Activated CD8-positive, alpha-beta T cell treated with anti-CD3 and anti-CD28 coated beads, Interleukin-2, amount 10 ng/mL, durations not matched to agents 7 days and 5 days (primary cell): ENCODE measurements at regions of chr2 and their contacts with region 1.

Region 1: GRCh38 chr2:7725171-7725849 is 808.1 kb downstream of the RNF144A start:
- DNase-seq: peak; percentile 80
- ATAC-seq: peak; percentile 83
- H3K4me3 Mint-ChIP-seq: peak overlapping the region; percentile 76
- H3K27ac Mint-ChIP-seq: peak overlapping the region; percentile 86
- H3K4me1 Mint-ChIP-seq: peaks cover 60% of the 10 kb centered on the region
- H3K27me3 Mint-ChIP-seq: no peaks in the 10 kb centered on the region

Region 2: GRCh38 chr2:7444626-7445025 is 280.7 kb before region 1 on chr2:
- CTCF ChIA-PET with region 1: interaction called, 4 read pairs
- POLR2A ChIA-PET with region 1: interaction called, 71 read pairs
- DNase-seq: no peak
- ATAC-seq: peak; percentile 18
- H3K4me3 Mint-ChIP-seq: no peak overlapping the region
- H3K27ac Mint-ChIP-seq: peak overlapping the region; percentile 28
- H3K4me1 Mint-ChIP-seq: peaks cover 73% of the 10 kb centered on the region
- H3K27me3 Mint-ChIP-seq: no peaks in the 10 kb centered on the region

Region 3: DNA sequence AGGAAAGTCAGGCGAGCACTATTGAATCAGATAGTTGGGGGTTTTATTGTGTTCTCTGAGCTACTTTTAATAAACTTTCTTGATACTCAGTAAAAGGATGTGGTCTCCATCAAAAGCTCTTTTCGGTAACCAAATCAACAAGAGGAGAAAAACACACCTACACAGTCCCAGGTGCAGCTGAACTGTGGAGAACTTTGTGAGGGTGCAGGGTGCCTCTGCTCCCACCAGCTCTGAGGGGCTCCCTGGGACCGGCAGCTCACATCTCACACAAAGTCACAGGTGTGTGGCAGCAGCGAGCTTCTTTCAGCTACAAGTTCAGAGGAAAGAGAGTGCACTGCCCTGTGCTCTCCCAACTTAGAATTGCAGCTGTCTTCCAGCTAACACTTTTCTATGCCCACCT is 157.7 kb before region 1 on chr2:
- CTCF ChIA-PET with region 1: interaction called, 17 read pairs
- POLR2A ChIA-PET with region 1: interaction called, 17 read pairs
- DNase-seq: peak; percentile 80
- ATAC-seq: peak; percentile 94
- H3K4me3 Mint-ChIP-seq: peak overlapping the region; percentile 60
- H3K27ac Mint-ChIP-seq: peak overlapping the region; percentile 95
- H3K4me1 Mint-ChIP-seq: peaks cover 63% of the 10 kb centered on the region
- H3K27me3 Mint-ChIP-seq: no peaks in the 10 kb centered on the region

Region 4: DNA sequence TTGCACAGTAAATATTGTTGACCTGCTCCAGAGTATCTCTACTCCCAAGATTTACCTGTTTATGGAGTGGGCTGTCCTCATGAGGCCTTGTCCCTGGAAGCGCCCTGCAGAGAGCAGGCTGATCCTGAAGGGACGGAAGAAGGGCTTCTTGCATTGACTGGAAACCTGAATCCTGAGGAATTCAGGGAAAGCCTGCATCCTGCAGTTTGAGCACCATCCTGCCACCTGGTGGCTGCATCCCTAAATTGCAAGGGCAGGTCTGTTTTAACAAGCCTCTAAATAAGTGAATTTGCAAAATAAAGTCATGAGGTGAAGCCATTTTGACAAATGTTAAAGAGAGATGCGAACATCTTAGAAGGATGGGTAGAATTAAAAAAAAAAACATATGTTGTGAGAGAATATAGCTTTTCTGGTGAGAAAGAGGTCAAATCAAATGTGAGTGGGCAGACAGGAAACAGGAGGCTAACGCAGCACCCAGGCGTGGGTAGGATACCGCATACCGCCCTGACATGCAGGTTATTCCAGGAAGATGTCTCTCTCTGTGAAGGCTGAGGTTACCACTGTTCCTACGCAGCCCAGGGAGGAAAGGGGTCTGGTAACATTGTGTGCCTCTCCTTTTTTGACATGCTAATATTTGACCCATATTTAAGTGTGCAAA is 53.2 kb before region 1 on chr2:
- CTCF ChIA-PET with region 1: interaction called, 40 read pairs
- POLR2A ChIA-PET with region 1: interaction called, 16 read pairs
- DNase-seq: peak; percentile 77
- ATAC-seq: peak; percentile 85
- H3K4me3 Mint-ChIP-seq: peak overlapping the region; percentile 40
- H3K27ac Mint-ChIP-seq: peak overlapping the region; percentile 87
- H3K4me1 Mint-ChIP-seq: peaks cover 53% of the 10 kb centered on the region
- H3K27me3 Mint-ChIP-seq: no peaks in the 10 kb centered on the region

Region 5: GRCh38 chr2:7738596-7738995 is 13.3 kb after region 1 on chr2:
- CTCF ChIA-PET with region 1: interaction called, 16 read pairs
- POLR2A ChIA-PET with region 1: interaction called, 8 read pairs
- DNase-seq: no peak
- ATAC-seq: no peak
- H3K4me3 Mint-ChIP-seq: no peak overlapping the region
- H3K27ac Mint-ChIP-seq: no peak overlapping the region
- H3K4me1 Mint-ChIP-seq: peaks cover 47% of the 10 kb centered on the region
- H3K27me3 Mint-ChIP-seq: no peaks in the 10 kb centered on the region